Heart left ventricle (tissue), 16 donors: ENCODE measurements at regions of chr22 and their contacts with region 1.

Region 1: GRCh38 chr22:27512283-27512761 is 289.2 kb downstream of the MN1 start:
- DNase-seq: peak; percentile 85 to 90 (median 87)
- ATAC-seq: peak; percentile 85 to 91 (median 88)
- H3K4me3 ChIP-seq: no peak overlapping the region
- H3K27ac ChIP-seq: peak overlapping the region; percentile 3 to 77 (median 64)
- H3K4me1 ChIP-seq: peaks cover 0 to 30% (median 8%) of the 10 kb centered on the region in 12 donors
- H3K27me3 ChIP-seq: no peaks in the 10 kb centered on the region
- CTCF ChIP-seq: no peak
- POLR2A ChIP-seq: no peak

Region 2: DNA sequence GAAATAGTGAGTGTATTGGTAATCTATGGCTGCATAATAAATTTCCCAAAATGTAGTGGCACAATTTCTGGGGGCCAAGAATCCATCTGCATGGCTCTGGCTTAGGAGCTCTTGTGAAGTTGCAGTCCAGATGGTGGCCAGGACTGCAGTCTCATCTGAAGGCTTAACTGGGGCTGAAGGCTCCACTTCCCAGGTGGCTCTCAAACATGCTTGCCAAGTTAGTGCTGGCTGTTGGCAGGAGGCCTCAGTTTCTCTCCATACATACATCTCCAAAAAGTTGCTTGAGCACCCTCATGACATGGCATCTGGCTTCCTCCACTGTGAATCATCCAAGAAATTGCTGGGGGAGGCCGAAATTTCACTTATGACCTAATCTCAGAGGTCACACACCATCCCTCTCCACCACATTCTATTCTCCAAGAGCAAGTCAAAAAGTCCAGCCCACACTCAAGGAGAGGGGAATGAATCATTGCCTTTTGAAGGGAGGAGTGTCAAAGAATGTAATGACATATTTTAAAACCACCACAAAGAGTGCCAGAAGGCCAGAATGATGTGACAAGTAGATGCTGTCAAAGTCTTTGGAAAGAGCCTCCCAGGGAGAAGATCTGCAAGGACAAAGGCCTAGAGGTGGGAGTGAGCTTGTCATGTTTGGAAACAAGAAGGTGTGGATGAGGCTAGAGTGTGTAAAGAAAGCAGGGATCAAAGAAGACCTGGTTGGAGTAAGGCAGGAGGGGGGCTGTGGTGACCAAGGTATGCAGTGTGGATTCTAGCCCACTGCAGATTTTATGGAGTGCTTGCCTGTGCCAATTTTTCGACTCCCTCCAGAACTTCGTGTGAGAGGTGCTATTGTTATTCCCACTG is 288.8 kb before region 1 on chr22:
- intact Hi-C with region 1: no loop called
- DNase-seq: no peak
- ATAC-seq: peak in 3 of 4 donors; percentile 56 to 89 (median 71)
- H3K4me3 ChIP-seq: no peak overlapping the region
- H3K27ac ChIP-seq: peak overlapping the region in 4 of 12 donors; percentile 5 to 59 (median 55)
- H3K4me1 ChIP-seq: peaks cover 0 to 21% (median 0%) of the 10 kb centered on the region in 12 donors
- H3K27me3 ChIP-seq: peaks cover 0 to 15% (median 0%) of the 10 kb centered on the region in 9 donors
- CTCF ChIP-seq: no peak
- POLR2A ChIP-seq: no peak

Region 3: GRCh38 chr22:27438271-27438980 is 73.9 kb before region 1 on chr22:
- intact Hi-C with region 1: loop called in 1 of 10 experiments (anchors 10 kb)
- DNase-seq: peak in 1 of 5 donors; percentile 64
- ATAC-seq: peak in 1 of 4 donors; percentile 21
- H3K4me3 ChIP-seq: peak overlapping the region in 1 of 12 donors; percentile 13
- H3K27ac ChIP-seq: peak overlapping the region in 5 of 12 donors; percentile 5 to 52 (median 7)
- H3K4me1 ChIP-seq: peaks cover 0 to 37% (median 10%) of the 10 kb centered on the region in 12 donors
- H3K27me3 ChIP-seq: peaks cover 0 to 38% (median 3%) of the 10 kb centered on the region in 9 donors
- CTCF ChIP-seq: peak in 3 of 12 donors; percentile 10 to 18 (median 16)
- POLR2A ChIP-seq: no peak

Region 4: DNA sequence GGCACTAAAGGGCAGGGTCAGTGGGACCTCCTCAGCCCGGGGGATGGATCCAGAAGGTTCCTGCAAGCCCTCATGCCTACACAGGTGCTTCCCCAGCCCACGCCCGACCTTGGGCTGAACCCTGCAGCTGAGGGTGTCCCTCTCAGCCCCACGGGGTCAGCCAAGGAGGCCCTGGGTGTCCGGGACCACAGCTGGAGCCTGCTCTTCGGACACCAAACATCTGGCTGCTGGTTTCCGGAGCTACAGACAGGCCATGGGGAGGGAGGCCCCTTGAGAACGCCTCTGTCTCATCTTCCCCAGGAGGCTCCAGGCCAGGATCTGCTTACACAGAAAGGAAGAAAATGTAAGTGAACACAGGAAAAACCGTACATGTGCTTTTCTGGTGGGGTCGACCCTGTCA is 66.4 kb before region 1 on chr22:
- intact Hi-C with region 1: loop called in 1 of 10 experiments (anchors 5 kb)
- DNase-seq: peak; percentile 62 to 73 (median 70)
- ATAC-seq: peak in 3 of 4 donors; percentile 53 to 86 (median 81)
- H3K4me3 ChIP-seq: no peak overlapping the region
- H3K27ac ChIP-seq: peak overlapping the region in 2 of 12 donors; percentile 0 to 42
- H3K4me1 ChIP-seq: peaks cover 0 to 7% (median 0%) of the 10 kb centered on the region in 12 donors
- H3K27me3 ChIP-seq: peaks cover 0 to 10% (median 0%) of the 10 kb centered on the region in 9 donors
- CTCF ChIP-seq: no peak
- POLR2A ChIP-seq: no peak

Region 5: GRCh38 chr22:27581688-27582087 is 69.4 kb after region 1 on chr22:
- intact Hi-C with region 1: loop called in 2 of 10 experiments (anchors 2 to 5 kb)
- DNase-seq: peak; percentile 85 to 93 (median 87)
- ATAC-seq: peak; percentile 77 to 83 (median 80)
- H3K4me3 ChIP-seq: no peak overlapping the region
- H3K27ac ChIP-seq: peak overlapping the region in 8 of 12 donors; percentile 8 to 73 (median 58)
- H3K4me1 ChIP-seq: peaks cover 0 to 39% (median 9%) of the 10 kb centered on the region in 12 donors
- H3K27me3 ChIP-seq: no peaks in the 10 kb centered on the region
- CTCF ChIP-seq: no peak
- POLR2A ChIP-seq: no peak